ENCODE measurements at regions of chr5 and their contacts with region 1.

Region 1: GRCh38 chr5:88140856-88141752 is 127.5 kb downstream of the TMEM161B start:
- DNase-seq: peak; percentile 44
- ATAC-seq: peak; percentile 36
- H3K4me3 ChIP-seq: peak overlapping the region in 3 of 5 experiments; percentile 5 to 35 (median 8)
- H3K4me3 Mint-ChIP-seq: no peak overlapping the region
- H3K27ac ChIP-seq: no peak overlapping the region
- H3K27ac Mint-ChIP-seq: no peak overlapping the region
- H3K4me1 ChIP-seq: peaks cover 51 to 54% of the 10 kb centered on the region in 2 donors
- H3K4me1 Mint-ChIP-seq: peaks cover 8% of the 10 kb centered on the region
- H3K27me3 ChIP-seq: peaks cover 2 to 68% (median 58%) of the 10 kb centered on the region in 4 experiments
- H3K27me3 Mint-ChIP-seq: peaks cover 36% of the 10 kb centered on the region
- CTCF ChIP-seq: peak; percentile 29

Region 2: GRCh38 chr5:88674356-88675167 is 533.5 kb after region 1 on chr5:
- CTCF ChIA-PET with region 1: no interaction called
- POLR2A ChIA-PET with region 1: no interaction called
- intact Hi-C with region 1: loop called (anchors 5 kb)
- DNase-seq: peak; percentile 74
- ATAC-seq: peak; percentile 44
- H3K4me3 ChIP-seq: peak overlapping the region; percentile 21 to 63 (median 49)
- H3K4me3 Mint-ChIP-seq: peak overlapping the region; percentile 91
- H3K27ac ChIP-seq: no peak overlapping the region
- H3K27ac Mint-ChIP-seq: peak overlapping the region; percentile 80
- H3K4me1 ChIP-seq: peaks cover 25 to 62% of the 10 kb centered on the region in 2 donors
- H3K4me1 Mint-ChIP-seq: peaks cover 28% of the 10 kb centered on the region
- H3K27me3 ChIP-seq: peaks cover 8 to 88% (median 85%) of the 10 kb centered on the region in 4 experiments
- H3K27me3 Mint-ChIP-seq: peaks cover 82% of the 10 kb centered on the region
- CTCF ChIP-seq: no peak